Colonic mucosa (tissue), 4 donors: ENCODE measurements at regions of chr4 and their contacts with region 1.

Region 1: DNA sequence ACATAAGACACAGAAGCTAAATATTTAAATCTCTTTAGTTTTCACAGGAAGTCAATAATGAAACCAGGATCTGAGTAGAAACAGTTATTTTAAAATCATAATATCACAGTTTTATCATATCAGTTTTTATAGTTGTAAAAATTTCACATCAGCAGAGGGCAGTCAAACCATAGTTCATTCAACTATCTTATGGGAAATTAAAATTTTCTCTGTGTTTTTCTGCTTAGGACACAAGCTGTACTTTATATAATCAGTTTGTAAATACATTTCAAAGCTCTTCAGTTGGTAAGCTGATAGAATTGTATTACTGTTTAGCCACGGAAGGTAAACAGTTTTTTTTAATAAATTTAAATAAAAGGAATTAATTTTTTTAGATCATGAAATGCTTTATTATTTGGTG is 204.8 kb upstream of the NUDT6 start:
- DNase-seq: no peak
- H3K4me3 ChIP-seq: no peak overlapping the region
- H3K27ac ChIP-seq: no peak overlapping the region
- H3K4me1 ChIP-seq: no peaks in the 10 kb centered on the region
- H3K27me3 ChIP-seq: no peaks in the 10 kb centered on the region
- CTCF ChIP-seq: no peak

Region 2: GRCh38 chr4:123661080-123661737 is 534.0 kb after region 1 on chr4:
- intact Hi-C with region 1: loop called (anchors 5 kb)
- DNase-seq: no peak
- H3K4me3 ChIP-seq: no peak overlapping the region
- H3K27ac ChIP-seq: no peak overlapping the region
- H3K4me1 ChIP-seq: no peaks in the 10 kb centered on the region
- H3K27me3 ChIP-seq: no peaks in the 10 kb centered on the region
- CTCF ChIP-seq: peak; percentile 46